ENCODE measurements at regions of chr5 and their contacts with region 1.

Region 1: GRCh38 chr5:147539053-147539452 is 29.2 kb upstream of the DPYSL3 start:
- DNase-seq: no peak
- H3K4me3 ChIP-seq: no peak overlapping the region
- CTCF ChIP-seq: no peak

Region 2: DNA sequence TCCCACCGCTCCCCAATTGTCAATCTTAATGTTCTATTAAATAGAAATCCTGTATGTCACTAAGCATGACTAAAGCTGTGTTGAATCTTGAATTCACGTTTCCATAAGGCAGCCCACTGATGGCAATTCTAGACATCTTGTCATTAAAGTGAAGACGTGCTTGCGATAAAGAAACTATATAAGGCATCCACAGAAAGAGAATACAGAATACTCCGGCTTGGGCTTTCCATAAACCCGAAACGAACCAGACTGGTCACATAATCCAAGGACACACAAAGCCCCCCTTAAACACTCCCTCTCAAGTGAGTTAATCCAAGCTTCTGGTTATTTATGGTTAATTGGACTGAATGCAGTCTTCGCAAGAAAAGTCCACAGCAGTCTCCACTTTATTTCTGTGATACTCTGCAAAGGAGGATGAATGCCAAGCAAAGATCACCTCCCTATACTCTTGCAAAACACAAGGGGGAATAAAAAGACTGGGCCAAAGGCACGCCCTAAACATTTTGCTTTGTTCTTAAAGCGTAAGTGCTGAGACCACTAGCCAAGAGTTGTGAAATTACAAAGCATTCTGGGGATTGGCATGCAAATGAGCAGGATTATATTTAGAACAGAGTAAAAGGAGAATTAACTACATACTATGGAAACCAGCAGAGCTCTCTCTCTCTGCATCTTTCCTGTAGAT is 83.9 kb before region 1 on chr5:
- in situ Hi-C with region 1: loop called (anchors 5 kb)
- DNase-seq: peak; percentile 90
- H3K4me3 ChIP-seq: peak overlapping the region; percentile 14
- CTCF ChIP-seq: no peak

Measured in astrocyte of the cerebellum (primary cell).